Common myeloid progenitor, CD34-positive (primary cell): ENCODE measurements at regions of chr20 and their contacts with region 1.

Region 1: DNA sequence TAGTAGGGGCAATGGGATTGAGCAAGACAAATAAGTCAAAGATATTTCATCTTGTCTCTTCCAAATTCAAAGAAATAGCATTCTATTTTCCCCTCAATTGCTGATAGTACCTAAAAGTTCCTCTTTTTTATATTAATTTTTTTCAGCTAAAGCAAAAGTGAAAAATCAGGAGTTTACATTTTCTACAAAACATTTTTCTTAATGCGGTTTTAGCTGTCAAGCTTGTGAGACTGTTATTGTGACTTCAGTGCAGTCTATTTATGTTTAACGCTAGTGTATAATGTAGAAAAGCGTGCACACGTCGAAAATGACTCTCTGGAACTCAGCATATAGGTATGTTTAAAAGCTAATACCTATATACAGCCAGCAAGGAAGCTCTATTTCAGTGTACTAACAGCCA is 119.8 kb downstream of the BTBD3 start:
- DNase-seq: peak in 2 of 3 donors; percentile 56 to 71
- H3K4me3 ChIP-seq: peak overlapping the region in 1 of 7 experiments; percentile 2
- H3K27ac ChIP-seq: peak overlapping the region in 1 of 2 experiments; percentile 39
- H3K4me1 ChIP-seq: peaks cover 7 to 19% (median 12%) of the 10 kb centered on the region in 4 experiments
- H3K27me3 ChIP-seq: no peaks in the 10 kb centered on the region

Region 2: DNA sequence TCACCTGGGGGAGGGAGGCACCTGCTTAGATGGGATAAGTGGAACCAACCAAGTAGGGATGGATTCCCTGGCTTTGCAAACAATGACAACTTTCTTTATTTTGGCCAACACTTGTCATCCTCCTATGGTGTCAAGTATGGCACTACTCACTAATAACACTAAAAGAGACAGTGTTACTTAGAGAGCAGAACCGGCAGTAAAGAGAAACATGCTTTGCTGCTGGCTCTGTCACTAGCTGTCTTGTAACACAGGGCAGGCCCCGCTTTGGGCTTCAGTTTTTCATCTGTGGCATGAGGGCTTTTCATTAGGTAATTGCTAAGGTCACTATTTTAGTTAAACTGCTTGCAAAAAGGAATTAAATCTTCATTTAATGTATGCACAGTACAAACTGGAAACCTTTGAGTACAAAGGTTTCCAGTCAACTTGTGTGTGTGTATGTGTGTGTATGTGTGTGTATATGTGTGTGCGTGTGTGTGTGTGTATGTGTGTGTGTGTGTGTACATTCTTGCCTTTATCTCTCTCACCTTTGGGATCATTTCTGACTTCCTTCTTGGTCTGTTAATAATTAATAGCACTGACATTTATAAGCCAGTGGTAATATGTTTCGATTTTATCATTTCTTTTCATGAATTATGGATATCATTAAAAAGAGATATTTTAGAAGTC is 55.1 kb before region 1 on chr20:
- CTCF ChIA-PET with region 1: no interaction called
- POLR2A ChIA-PET with region 1: no interaction called
- DNase-seq: no peak
- H3K4me3 ChIP-seq: no peak overlapping the region
- H3K27ac ChIP-seq: no peak overlapping the region
- H3K4me1 ChIP-seq: no peaks in the 10 kb centered on the region
- H3K27me3 ChIP-seq: no peaks in the 10 kb centered on the region

Region 3: GRCh38 chr20:12012241-12013222 is 25.0 kb before region 1 on chr20:
- CTCF ChIA-PET with region 1: interaction called, 17 read pairs
- POLR2A ChIA-PET with region 1: no interaction called
- DNase-seq: peak; percentile 76 to 90 (median 85)
- H3K4me3 ChIP-seq: peak overlapping the region in 3 of 7 experiments; percentile 3 to 48 (median 13)
- H3K27ac ChIP-seq: no peak overlapping the region
- H3K4me1 ChIP-seq: peaks cover 0 to 12% (median 9%) of the 10 kb centered on the region in 4 experiments
- H3K27me3 ChIP-seq: no peaks in the 10 kb centered on the region

Region 4: DNA sequence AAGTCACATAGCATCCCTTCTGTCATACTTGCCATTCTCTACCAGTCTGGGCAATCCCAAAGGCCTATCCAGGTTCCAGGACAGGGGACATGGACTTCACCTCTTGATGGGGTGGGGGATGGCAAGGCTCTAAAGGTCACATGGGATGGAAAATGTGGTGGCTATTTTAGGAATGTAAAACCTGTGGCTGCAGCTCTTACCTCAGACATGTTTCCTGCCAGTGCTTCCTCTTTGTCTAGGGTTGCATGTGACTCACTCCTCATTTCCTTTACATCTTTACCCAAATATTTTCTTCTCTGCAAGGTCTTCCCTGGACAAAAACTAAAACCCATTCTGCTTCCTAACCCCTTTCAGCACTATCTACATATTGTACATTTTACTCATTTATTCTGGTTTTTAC is 15.8 kb after region 1 on chr20:
- CTCF ChIA-PET with region 1: no interaction called
- POLR2A ChIA-PET with region 1: no interaction called
- DNase-seq: peak; percentile 77 to 94 (median 88)
- H3K4me3 ChIP-seq: peak overlapping the region in 2 of 7 experiments; percentile 10 to 36
- H3K27ac ChIP-seq: peak overlapping the region in 1 of 2 experiments; percentile 69
- H3K4me1 ChIP-seq: peaks cover 12 to 51% (median 33%) of the 10 kb centered on the region in 4 experiments
- H3K27me3 ChIP-seq: no peaks in the 10 kb centered on the region

Region 5: DNA sequence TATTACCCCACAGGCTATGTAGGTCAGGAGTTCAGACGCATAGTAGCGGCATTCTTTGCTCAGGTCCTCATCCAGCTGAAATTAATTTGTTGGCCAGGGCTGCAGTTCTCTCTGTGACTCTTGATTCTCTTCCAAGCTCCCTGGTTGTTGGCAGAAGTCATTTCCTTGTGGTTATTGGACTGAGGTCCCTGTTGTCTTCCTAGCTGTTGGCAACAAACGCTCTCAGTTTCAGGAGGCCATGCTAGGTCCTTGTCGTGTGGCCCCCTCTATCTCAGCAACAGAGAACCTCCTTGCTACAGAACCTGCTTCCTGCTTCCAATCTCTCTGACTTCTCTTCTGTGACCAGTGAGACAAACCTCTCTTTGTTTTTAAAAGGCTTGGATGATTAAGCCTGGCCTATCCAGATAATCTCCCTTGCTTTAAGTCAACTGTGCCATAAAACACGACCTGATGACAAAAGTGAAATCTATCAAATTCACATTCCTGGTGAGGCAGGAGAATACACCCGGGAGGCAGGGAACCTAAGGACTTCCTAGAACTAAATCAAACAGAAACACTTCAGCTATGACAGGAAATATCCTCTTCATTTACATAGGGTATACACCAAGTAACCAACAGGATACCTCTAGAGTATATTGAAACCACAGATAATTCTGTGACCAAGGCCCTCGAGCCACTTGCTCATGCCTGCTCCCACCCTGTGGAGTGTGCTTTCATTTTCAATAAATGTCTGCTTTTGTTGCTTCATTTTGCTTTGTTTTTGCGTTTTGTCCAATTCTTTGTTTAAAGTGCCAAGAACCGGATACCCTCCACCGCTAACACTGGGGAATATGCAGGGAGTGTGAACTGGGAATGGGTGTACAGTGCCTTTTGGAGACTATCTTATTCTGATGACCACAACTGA is 76.2 kb after region 1 on chr20:
- CTCF ChIA-PET with region 1: no interaction called
- POLR2A ChIA-PET with region 1: no interaction called
- DNase-seq: peak in 2 of 3 donors; percentile 22 to 46
- H3K4me3 ChIP-seq: no peak overlapping the region
- H3K27ac ChIP-seq: no peak overlapping the region
- H3K4me1 ChIP-seq: peaks cover 0 to 18% (median 6%) of the 10 kb centered on the region in 4 experiments
- H3K27me3 ChIP-seq: no peaks in the 10 kb centered on the region